Activated CD4-positive, alpha-beta T cell treated with anti-CD3 and anti-CD28 coated beads for 36 hours (primary cell): ENCODE measurements at regions of chr10 and their contacts with region 1.

Region 1: DNA sequence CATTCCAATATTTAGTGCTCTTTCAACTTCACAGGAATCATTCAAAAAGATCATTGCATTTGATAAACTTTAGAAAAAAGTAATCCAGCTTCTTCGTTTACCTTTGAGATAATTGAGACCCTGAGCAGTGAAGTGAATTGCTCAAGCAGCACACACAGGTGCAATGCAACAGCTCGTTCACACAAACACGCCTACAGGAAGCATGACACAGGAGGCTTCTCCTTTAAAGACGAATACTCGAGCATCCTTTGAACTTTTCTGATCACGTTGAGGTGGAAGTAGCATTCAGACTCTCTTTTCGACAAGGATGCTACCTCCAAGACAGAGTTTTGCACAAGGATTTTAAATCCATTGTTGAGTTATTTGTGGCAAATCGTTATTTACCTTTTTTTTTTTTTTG is 18.0 kb upstream of the RSU1 start:
- DNase-seq: peak; percentile 57
- ATAC-seq: peak; percentile 90
- H3K4me3 Mint-ChIP-seq: peak overlapping the region; percentile 34
- H3K27ac Mint-ChIP-seq: no peak overlapping the region
- H3K4me1 Mint-ChIP-seq: peaks cover 5% of the 10 kb centered on the region
- H3K27me3 Mint-ChIP-seq: no peaks in the 10 kb centered on the region

Region 2: DNA sequence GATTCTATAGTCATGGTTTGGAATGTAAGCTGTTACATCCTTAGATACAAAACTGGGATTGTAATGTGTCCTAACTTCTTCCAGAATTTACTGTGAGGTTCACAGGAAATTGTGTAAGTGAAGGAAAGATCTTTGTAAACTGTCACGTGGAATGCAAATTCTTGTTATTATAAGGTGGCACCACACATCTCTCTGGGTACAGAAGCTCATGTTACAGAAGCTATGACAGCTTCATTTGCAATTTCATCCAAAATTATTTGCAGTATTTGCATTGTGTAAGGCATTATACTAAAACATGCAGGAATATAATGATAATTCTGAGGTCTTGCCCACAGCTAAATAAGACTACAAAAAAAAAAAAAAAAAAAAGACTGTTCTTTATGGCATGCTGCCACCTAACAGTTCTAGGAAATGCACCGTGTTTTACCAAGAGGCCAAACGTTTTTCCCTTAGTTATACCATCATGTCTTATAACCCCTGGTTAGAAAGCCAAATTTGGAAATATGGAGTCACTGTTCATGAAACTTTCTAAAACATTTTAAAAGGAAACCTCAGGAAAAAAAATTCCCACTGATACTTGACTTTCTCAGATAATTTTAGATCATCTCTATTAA is 992.6 kb before region 1 on chr10:
- CTCF ChIA-PET with region 1: no interaction called
- POLR2A ChIA-PET with region 1: interaction called, 14 read pairs
- intact Hi-C with region 1: no loop called
- DNase-seq: no peak
- ATAC-seq: no peak
- H3K4me3 Mint-ChIP-seq: no peak overlapping the region
- H3K27ac Mint-ChIP-seq: no peak overlapping the region
- H3K4me1 Mint-ChIP-seq: peaks cover 14% of the 10 kb centered on the region
- H3K27me3 Mint-ChIP-seq: no peaks in the 10 kb centered on the region

Region 3: GRCh38 chr10:16854623-16855022 is 19.4 kb after region 1 on chr10:
- CTCF ChIA-PET with region 1: no interaction called
- POLR2A ChIA-PET with region 1: no interaction called
- intact Hi-C with region 1: no loop called
- DNase-seq: no peak
- ATAC-seq: no peak
- H3K4me3 Mint-ChIP-seq: no peak overlapping the region
- H3K27ac Mint-ChIP-seq: no peak overlapping the region
- H3K4me1 Mint-ChIP-seq: no peaks in the 10 kb centered on the region
- H3K27me3 Mint-ChIP-seq: no peaks in the 10 kb centered on the region